Activated T-helper 2 cell treated with anti-CD3 and anti-CD28 coated beads, Interferon-gamma antibody, Interleukin-2, Interleukin-4, amounts not matched to agents 10 μg/mL and 5 μg/mL and 100 μg/mL, durations not matched to agents 14 hours and 24 hours and 36 hours (primary cell): ENCODE measurements at regions of chr7 and their contacts with region 1.

Region 1: GRCh38 chr7:87152107-87152844 is at the start of gene DMTF1:
- DNase-seq: peak; percentile 83
- H3K4me3 Mint-ChIP-seq: peak within 1 kb of the TSS; percentile 93
- H3K27ac Mint-ChIP-seq: peak within 1 kb of the TSS; percentile 96
- H3K4me1 Mint-ChIP-seq: peaks cover 39% of the 10 kb centered on the region
- H3K27me3 Mint-ChIP-seq: no peaks in the 10 kb centered on the region
- total RNA-seq, gene DMTF1: 103 and 112 TPM in 2 replicates

Region 2: GRCh38 chr7:86939197-86939814 is 213.0 kb before region 1 on chr7:
- intact Hi-C with region 1: loop called (anchors 2 kb)
- DNase-seq: no peak
- H3K4me3 Mint-ChIP-seq: no peak overlapping the region
- H3K27ac Mint-ChIP-seq: no peak overlapping the region
- H3K4me1 Mint-ChIP-seq: no peaks in the 10 kb centered on the region
- H3K27me3 Mint-ChIP-seq: peaks cover 13% of the 10 kb centered on the region

Region 3: DNA sequence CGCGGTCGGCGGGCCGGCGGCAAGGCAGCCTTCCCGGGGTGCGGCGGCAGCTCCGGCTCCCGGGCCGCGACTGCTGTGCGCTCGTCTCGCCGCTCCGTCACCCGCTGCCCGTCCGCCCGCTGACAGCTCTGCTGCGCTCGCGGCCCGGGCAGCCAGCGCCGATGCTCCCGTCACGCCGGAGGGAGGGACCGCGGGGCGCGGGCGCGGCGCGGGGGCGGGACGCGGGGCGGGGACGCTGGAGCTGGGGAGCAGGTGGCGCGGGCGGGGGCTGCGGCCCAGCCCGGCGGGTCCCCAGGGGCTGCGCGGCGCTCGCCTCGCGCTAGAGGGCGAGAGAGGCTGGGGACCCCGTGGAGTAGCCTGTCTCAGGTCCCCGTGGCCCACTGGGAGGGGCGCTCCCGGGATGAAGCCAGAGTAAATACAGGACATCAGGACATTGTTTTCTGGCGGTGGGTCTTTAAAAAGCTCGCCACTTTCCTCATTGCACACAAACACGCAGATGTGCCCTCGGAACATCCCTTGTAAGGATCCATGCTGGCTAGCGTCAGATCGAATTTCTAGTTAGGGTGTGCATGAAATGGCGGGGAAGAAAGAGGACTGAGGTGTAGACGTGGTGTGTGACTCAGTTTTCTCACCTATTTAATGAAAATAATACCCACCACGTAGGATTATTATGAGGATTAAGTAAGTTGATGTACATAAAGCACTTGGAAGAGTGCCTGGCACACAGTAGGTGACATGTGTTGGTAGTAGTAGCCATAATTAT is 92.6 kb before region 1 on chr7 and contains the start of gene ELAPOR2:
- intact Hi-C with region 1: loop called (anchors 2 kb)
- DNase-seq: peak; percentile 71
- H3K4me3 Mint-ChIP-seq: peak within 1 kb of the TSS; percentile 71
- H3K27ac Mint-ChIP-seq: no peak within 1 kb of the TSS
- H3K4me1 Mint-ChIP-seq: peaks cover 11% of the 10 kb centered on the region
- H3K27me3 Mint-ChIP-seq: peaks cover 17% of the 10 kb centered on the region
- total RNA-seq, gene ELAPOR2: 2.4 and 2.7 TPM in 2 replicates

Region 4: DNA sequence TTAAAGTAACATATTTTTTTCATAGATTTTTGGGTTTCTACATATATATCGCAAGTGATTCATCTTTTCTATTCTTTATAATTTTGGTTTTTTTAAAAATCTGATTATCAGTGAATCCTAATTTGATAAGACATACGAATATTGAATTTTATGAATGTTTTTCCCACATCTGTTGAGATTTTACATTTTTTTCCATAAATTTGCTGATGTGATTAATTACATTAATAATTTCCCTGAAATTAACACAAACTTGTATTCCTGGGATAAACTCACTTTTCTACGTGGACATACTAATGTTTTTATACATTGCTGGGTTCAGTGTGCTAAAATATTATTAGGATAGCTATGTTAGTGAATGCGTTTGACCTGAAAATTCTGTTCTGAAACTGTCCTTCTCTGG is 26.0 kb after region 1 on chr7:
- intact Hi-C with region 1: no loop called
- DNase-seq: no peak
- H3K4me3 Mint-ChIP-seq: no peak overlapping the region
- H3K27ac Mint-ChIP-seq: no peak overlapping the region
- H3K4me1 Mint-ChIP-seq: peaks cover 13% of the 10 kb centered on the region
- H3K27me3 Mint-ChIP-seq: no peaks in the 10 kb centered on the region

Region 5: DNA sequence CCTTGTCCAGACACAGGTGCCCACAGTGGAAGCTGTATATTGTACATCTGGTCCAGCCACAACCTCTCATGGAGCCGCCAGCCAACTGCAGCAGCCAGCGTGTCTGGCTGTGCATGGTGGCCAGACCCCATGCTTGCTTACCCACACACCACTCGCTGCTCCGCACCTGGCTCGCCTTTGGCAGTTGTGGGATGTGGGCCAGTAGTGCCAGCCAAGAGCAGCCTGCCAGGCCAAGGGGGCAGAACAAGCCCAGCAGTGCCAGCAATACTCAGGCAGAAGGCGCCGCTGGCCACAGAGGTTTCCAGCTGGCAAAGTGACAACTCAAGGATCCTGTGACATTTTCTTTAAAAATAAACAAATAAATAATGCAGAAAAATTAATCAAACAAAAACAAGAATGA is 79.0 kb after region 1 on chr7:
- intact Hi-C with region 1: loop called (anchors 5 kb)
- DNase-seq: no peak
- H3K4me3 Mint-ChIP-seq: no peak overlapping the region
- H3K27ac Mint-ChIP-seq: no peak overlapping the region
- H3K4me1 Mint-ChIP-seq: peaks cover 5% of the 10 kb centered on the region
- H3K27me3 Mint-ChIP-seq: peaks cover 18% of the 10 kb centered on the region

Region 6: DNA sequence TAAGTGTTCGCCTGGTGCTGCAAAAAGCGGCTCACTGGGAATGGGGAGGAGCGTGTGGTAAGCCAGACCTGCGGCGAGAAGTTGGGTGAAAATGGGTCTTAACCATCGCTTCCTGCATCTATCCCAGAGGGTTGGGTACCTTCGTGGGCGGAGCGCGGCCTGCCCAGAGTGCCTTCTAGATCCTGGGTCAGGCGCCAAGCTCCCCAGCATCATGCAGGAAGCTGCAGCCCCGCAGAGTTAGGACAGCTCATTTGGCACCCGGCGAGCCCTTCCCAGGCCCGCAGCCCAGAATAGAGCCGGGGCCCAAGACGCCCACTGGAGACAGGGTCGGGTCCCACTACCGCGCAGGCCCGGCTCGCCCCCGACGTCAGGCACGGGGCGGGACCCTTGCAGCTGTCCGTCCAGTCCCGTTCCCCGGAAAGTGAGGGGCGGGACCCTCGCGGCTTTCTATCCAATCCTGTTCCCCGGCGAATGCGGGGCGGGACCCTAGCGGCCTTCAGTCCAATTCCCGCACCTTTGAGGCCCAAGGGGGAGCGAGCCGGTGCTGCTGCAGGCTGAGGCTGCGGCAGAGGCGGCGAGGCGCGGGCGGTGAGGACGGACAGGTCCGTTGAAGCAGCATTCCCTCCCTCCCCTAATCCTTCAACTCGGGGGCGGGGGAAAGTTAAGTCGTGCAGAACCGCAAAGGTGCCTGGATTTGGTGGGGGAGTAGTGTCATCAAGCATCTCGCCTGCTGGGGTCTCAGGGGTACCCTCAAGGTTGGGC is 193.1 kb after region 1 on chr7 and contains the start of gene CROT:
- intact Hi-C with region 1: loop called (anchors 1 kb)
- DNase-seq: peak; percentile 92
- H3K4me3 Mint-ChIP-seq: peak within 1 kb of the TSS; percentile 87
- H3K27ac Mint-ChIP-seq: peak within 1 kb of the TSS; percentile 79
- H3K4me1 Mint-ChIP-seq: peaks cover 38% of the 10 kb centered on the region
- H3K27me3 Mint-ChIP-seq: no peaks in the 10 kb centered on the region
- total RNA-seq, gene CROT: 7.5 and 7.9 TPM in 2 replicates

Region 7: DNA sequence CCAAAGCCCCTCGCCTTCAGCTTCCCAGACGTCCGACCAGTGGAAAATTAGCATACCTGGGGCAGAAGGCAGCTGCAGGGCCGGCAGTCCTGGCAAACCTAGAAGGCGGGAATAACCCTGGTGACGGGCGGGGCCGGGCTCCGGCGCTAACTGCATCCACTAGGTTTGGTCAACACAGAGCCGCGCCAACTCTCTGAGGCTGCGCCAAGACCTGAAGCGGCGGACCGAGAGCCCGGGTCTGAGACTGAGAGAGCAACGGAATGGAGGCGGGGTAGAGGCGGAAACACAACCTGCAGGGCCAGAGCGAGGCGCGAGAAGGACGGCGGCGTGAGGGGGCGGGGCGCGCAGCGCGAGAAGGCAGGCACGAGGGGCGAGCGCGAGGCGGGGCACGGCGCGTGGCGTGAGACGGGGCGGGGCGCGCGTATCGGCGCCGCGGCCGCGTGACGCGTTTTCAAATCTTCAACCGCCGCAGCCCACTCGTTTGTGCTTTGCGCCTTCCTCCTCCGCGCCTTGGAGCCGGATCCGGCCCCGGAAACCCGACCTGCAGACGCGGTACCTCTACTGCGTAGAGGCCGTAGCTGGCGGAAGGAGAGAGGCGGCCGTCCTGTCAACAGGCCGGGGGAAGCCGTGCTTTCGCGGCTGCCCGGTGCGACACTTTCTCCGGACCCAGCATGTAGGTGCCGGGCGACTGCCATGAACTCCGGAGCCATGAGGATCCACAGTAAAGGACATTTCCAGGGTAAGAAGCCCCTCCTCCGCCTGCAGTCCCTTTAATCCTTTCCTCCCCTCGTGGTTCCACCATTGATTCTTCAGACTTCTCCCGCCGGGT is 724.0 kb after region 1 on chr7 and contains the starts of genes DBF4 and SLC25A40:
- intact Hi-C with region 1: loop called (anchors 10 kb)
- DNase-seq: peak; percentile 96
- H3K4me3 Mint-ChIP-seq: peak within 1 kb of the TSS; percentile 96
- H3K27ac Mint-ChIP-seq: peak within 1 kb of the TSS; percentile 97
- H3K4me1 Mint-ChIP-seq: peaks cover 49% of the 10 kb centered on the region
- H3K27me3 Mint-ChIP-seq: no peaks in the 10 kb centered on the region
- total RNA-seq, gene DBF4: 72.3 and 75.3 TPM in 2 replicates
- total RNA-seq, gene SLC25A40: 48.7 and 49.3 TPM in 2 replicates

Region 8: GRCh38 chr7:87968021-87968420 is 815.7 kb after region 1 on chr7:
- intact Hi-C with region 1: no loop called
- DNase-seq: no peak
- H3K4me3 Mint-ChIP-seq: no peak overlapping the region
- H3K27ac Mint-ChIP-seq: no peak overlapping the region
- H3K4me1 Mint-ChIP-seq: no peaks in the 10 kb centered on the region
- H3K27me3 Mint-ChIP-seq: no peaks in the 10 kb centered on the region

Region 9: GRCh38 chr7:88219781-88220747 is 1067.8 kb after region 1 on chr7 and contains the start of gene SRI:
- intact Hi-C with region 1: loop called (anchors 10 kb)
- DNase-seq: peak; percentile 87
- H3K4me3 Mint-ChIP-seq: peak within 1 kb of the TSS; percentile 96
- H3K27ac Mint-ChIP-seq: peak within 1 kb of the TSS; percentile 99
- H3K4me1 Mint-ChIP-seq: peaks cover 37% of the 10 kb centered on the region
- H3K27me3 Mint-ChIP-seq: no peaks in the 10 kb centered on the region
- total RNA-seq, gene SRI: 264 and 271 TPM in 2 replicates